Activated B cell treated with CpG ODN at 0.5 μM for 24 hours (primary cell): ENCODE measurements at regions of chr19 and their contacts with region 1.

Region 1: DNA sequence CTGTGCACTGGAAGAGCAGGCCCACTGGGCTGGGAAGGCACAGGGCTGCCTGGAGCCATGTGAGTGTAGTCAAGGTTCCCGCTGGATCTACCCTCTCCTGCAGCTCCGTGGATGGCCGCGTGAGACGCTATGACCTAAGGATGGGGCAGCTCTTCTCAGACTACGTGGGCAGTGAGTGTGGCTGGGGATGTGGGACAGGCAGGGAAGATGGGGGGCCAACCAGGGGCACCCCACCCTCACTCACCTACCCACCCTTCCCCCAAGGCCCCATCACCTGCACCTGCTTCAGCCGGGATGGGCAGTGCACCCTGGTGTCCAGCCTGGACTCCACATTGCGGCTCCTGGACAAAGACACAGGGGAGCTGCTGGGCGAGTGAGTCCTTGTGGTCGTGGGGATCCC is 6.1 kb downstream of the WDR83 start:
- DNase-seq: no peak
- ATAC-seq: no peak
- H3K4me3 Mint-ChIP-seq: no peak overlapping the region
- H3K27ac Mint-ChIP-seq: no peak overlapping the region
- H3K4me1 Mint-ChIP-seq: peaks cover 44% of the 10 kb centered on the region
- H3K27me3 Mint-ChIP-seq: no peaks in the 10 kb centered on the region
- CTCF ChIP-seq: no peak

Region 2: DNA sequence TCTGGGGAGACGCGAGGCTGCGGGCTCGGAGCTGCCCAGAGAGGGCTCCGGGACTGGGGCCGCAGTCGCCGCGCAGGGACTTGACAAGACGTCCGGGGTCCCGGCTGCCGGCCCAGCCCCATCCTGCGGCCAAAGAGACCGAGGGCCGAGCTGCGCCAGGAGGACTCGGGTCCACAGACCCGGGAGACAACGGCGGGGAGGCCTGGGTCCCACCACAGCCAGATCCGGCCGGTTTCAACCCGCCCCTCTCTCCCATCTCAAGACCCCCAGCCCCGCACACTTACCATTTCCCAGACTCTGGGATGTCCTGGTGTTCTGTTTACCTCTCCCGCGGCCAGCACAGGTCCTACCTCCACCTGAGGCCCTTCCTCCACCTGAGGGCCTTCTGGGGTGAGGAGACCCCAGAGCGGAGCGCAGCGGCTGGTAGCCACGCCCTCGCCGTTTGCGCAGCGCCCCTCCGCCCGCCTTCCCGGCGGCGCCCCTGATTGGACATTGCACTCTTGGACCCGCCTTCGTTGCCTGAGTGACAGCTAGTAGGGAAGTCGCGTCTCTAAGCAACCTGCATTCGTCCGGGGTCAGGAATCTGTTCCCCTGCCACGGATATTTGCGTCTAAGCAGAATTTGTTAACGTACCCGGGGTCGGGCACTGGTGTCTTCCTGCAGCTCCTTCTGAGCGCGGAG is 188.2 kb before region 1 on chr19 and contains the start of gene ZNF709:
- CTCF ChIA-PET with region 1: no interaction called
- POLR2A ChIA-PET with region 1: no interaction called
- intact Hi-C with region 1: no loop called
- DNase-seq: peak; percentile 90
- ATAC-seq: peak; percentile 98
- H3K4me3 Mint-ChIP-seq: peak within 1 kb of the TSS; percentile 96
- H3K27ac Mint-ChIP-seq: peak within 1 kb of the TSS; percentile 88
- H3K4me1 Mint-ChIP-seq: peaks cover 35% of the 10 kb centered on the region
- H3K27me3 Mint-ChIP-seq: no peaks in the 10 kb centered on the region
- CTCF ChIP-seq: no peak
- total RNA-seq, gene ZNF709: 4.8 and 6.4 TPM in 2 replicates

Region 3: GRCh38 chr19:12639901-12640613 is 32.7 kb before region 1 on chr19:
- CTCF ChIA-PET with region 1: interaction called, 15 read pairs
- POLR2A ChIA-PET with region 1: interaction called, 7 read pairs
- intact Hi-C with region 1: loop called (anchors 1 kb)
- DNase-seq: peak; percentile 75
- ATAC-seq: peak; percentile 95
- H3K4me3 Mint-ChIP-seq: peak overlapping the region; percentile 79
- H3K27ac Mint-ChIP-seq: peak overlapping the region; percentile 46
- H3K4me1 Mint-ChIP-seq: peaks cover 23% of the 10 kb centered on the region
- H3K27me3 Mint-ChIP-seq: no peaks in the 10 kb centered on the region
- CTCF ChIP-seq: no peak

Region 4: GRCh38 chr19:12867120-12868099 is 194.7 kb after region 1 on chr19:
- CTCF ChIA-PET with region 1: no interaction called
- POLR2A ChIA-PET with region 1: no interaction called
- intact Hi-C with region 1: no loop called
- DNase-seq: peak; percentile 74
- ATAC-seq: peak; percentile 89
- H3K4me3 Mint-ChIP-seq: peak overlapping the region; percentile 85
- H3K27ac Mint-ChIP-seq: peak overlapping the region; percentile 14
- H3K4me1 Mint-ChIP-seq: peaks cover 13% of the 10 kb centered on the region
- H3K27me3 Mint-ChIP-seq: peaks cover 2% of the 10 kb centered on the region
- CTCF ChIP-seq: no peak